CD4-positive, alpha-beta memory T cell (primary cell): ENCODE measurements at regions of chr10 and their contacts with region 1.

Region 1: DNA sequence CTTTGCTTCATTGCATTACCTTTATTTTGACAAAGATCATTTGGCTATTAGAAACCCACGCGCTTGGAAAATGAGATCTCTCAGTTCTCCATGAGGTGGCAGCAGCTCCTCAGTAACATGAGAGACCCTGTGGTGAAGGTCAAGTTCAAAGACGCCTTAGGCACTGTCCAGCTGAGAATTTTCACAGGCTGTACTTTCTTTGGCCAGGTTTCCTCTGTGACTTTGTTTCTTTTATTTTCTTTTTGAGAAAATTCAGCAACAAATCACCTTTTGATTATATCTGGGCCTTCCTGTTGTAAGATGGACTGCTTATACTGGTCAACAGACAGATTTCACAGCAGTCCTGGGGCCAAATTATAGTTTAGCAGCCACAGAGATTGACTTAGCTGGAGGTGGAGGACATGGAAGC is 54.5 kb downstream of the RAB18 start:
- DNase-seq: peak in 3 of 5 donors; percentile 19 to 38 (median 31)
- H3K4me3 ChIP-seq: no peak overlapping the region
- H3K4me3 Mint-ChIP-seq: no peak overlapping the region
- H3K27ac ChIP-seq: no peak overlapping the region
- H3K27ac Mint-ChIP-seq: no peak overlapping the region
- H3K4me1 ChIP-seq: no peaks in the 10 kb centered on the region
- H3K4me1 Mint-ChIP-seq: peaks cover 0 to 7% (median under 1%) of the 10 kb centered on the region in 4 donors
- H3K27me3 ChIP-seq: no peaks in the 10 kb centered on the region
- H3K27me3 Mint-ChIP-seq: no peaks in the 10 kb centered on the region

Region 2: DNA sequence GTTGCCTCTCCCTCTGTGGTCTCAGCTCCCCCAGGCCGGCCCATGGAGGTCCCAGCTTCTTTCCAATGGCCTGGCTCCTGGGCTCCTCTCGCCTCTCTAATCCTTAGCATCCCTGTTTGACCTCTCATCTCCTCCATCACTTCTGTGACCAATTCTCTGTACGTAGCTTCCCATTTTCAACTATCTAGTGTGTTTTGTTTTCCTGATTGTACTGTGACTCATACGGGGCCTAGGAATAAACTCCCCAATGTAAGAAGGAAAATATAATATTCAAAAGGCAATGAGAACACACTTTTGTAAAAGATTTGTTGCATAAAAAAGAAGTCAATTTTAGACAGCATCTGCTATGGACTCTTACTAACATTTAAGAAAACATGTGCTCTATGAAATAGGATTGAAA is 96.7 kb after region 1 on chr10:
- CTCF ChIA-PET with region 1: interaction called, 14 read pairs
- POLR2A ChIA-PET with region 1: no interaction called
- intact Hi-C with region 1: loop called (anchors 1 kb)
- DNase-seq: no peak
- H3K4me3 ChIP-seq: no peak overlapping the region
- H3K4me3 Mint-ChIP-seq: no peak overlapping the region
- H3K27ac ChIP-seq: no peak overlapping the region
- H3K27ac Mint-ChIP-seq: peak overlapping the region in 2 of 7 donors; percentile 48 to 68
- H3K4me1 ChIP-seq: no peaks in the 10 kb centered on the region
- H3K4me1 Mint-ChIP-seq: peaks cover 0 to 9% (median 2%) of the 10 kb centered on the region in 4 donors
- H3K27me3 ChIP-seq: no peaks in the 10 kb centered on the region
- H3K27me3 Mint-ChIP-seq: peaks cover 8 to 9% of the 10 kb centered on the region in 2 donors

Region 3: GRCh38 chr10:27661514-27662286 is 103.1 kb after region 1 on chr10:
- CTCF ChIA-PET with region 1: interaction called, 4 read pairs
- POLR2A ChIA-PET with region 1: no interaction called
- intact Hi-C with region 1: loop called (anchors 1 kb)
- DNase-seq: no peak
- H3K4me3 ChIP-seq: no peak overlapping the region
- H3K4me3 Mint-ChIP-seq: no peak overlapping the region
- H3K27ac ChIP-seq: no peak overlapping the region
- H3K27ac Mint-ChIP-seq: no peak overlapping the region
- H3K4me1 ChIP-seq: no peaks in the 10 kb centered on the region
- H3K4me1 Mint-ChIP-seq: peaks cover 0 to 4% (median under 1%) of the 10 kb centered on the region in 4 donors
- H3K27me3 ChIP-seq: peaks cover 7% of the 10 kb centered on the region
- H3K27me3 Mint-ChIP-seq: peaks cover 15 to 16% of the 10 kb centered on the region in 2 donors

Region 4: GRCh38 chr10:27783660-27784059 is 225.0 kb after region 1 on chr10:
- CTCF ChIA-PET with region 1: no interaction called
- POLR2A ChIA-PET with region 1: no interaction called
- intact Hi-C with region 1: no loop called
- DNase-seq: peak; percentile 11 to 42 (median 26)
- H3K4me3 ChIP-seq: no peak overlapping the region
- H3K4me3 Mint-ChIP-seq: no peak overlapping the region
- H3K27ac ChIP-seq: no peak overlapping the region
- H3K27ac Mint-ChIP-seq: no peak overlapping the region
- H3K4me1 ChIP-seq: no peaks in the 10 kb centered on the region
- H3K4me1 Mint-ChIP-seq: no peaks in the 10 kb centered on the region
- H3K27me3 ChIP-seq: no peaks in the 10 kb centered on the region
- H3K27me3 Mint-ChIP-seq: peaks cover 9 to 14% of the 10 kb centered on the region in 2 donors

Region 5: DNA sequence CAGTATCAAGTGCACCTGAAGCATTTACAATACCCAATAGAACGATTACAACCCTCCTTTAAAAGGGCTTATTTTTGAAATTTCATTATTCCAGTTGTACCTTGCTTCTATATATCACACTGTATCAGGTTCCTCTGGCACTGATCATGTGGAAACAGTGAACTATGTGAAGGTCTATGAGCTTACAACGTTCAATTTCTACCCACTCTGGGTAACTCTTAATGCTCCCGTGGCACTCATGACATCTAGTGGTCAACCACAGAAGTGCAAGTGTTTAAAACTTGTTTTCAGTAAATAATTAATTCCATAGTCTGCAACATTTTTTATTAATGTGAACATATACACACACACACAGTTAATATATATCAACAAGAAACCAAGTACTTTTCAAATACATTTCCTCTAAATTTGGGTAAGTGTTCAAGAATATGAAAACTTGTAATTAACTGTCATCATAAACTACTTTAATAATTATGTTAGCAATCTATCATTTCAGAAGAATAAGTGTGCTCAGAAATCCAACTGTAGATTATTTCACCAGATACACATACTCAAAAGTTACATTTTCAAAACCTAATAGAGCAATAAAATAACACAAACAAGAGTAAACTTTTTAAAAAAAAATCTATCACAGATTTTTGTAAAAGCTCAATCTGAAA is 683.3 kb after region 1 on chr10:
- CTCF ChIA-PET with region 1: no interaction called
- POLR2A ChIA-PET with region 1: no interaction called
- intact Hi-C with region 1: loop called (anchors 2 kb)
- DNase-seq: peak in 4 of 5 donors; percentile 36 to 49 (median 42)
- H3K4me3 ChIP-seq: no peak overlapping the region
- H3K4me3 Mint-ChIP-seq: no peak overlapping the region
- H3K27ac ChIP-seq: no peak overlapping the region
- H3K27ac Mint-ChIP-seq: no peak overlapping the region
- H3K4me1 ChIP-seq: peaks cover 14% of the 10 kb centered on the region
- H3K4me1 Mint-ChIP-seq: peaks cover 13 to 20% (median 17%) of the 10 kb centered on the region in 4 donors
- H3K27me3 ChIP-seq: no peaks in the 10 kb centered on the region
- H3K27me3 Mint-ChIP-seq: no peaks in the 10 kb centered on the region